Right cardiac atrium (tissue), 5 donors: ENCODE measurements at regions of chr2 and their contacts with region 1.

Region 1: DNA sequence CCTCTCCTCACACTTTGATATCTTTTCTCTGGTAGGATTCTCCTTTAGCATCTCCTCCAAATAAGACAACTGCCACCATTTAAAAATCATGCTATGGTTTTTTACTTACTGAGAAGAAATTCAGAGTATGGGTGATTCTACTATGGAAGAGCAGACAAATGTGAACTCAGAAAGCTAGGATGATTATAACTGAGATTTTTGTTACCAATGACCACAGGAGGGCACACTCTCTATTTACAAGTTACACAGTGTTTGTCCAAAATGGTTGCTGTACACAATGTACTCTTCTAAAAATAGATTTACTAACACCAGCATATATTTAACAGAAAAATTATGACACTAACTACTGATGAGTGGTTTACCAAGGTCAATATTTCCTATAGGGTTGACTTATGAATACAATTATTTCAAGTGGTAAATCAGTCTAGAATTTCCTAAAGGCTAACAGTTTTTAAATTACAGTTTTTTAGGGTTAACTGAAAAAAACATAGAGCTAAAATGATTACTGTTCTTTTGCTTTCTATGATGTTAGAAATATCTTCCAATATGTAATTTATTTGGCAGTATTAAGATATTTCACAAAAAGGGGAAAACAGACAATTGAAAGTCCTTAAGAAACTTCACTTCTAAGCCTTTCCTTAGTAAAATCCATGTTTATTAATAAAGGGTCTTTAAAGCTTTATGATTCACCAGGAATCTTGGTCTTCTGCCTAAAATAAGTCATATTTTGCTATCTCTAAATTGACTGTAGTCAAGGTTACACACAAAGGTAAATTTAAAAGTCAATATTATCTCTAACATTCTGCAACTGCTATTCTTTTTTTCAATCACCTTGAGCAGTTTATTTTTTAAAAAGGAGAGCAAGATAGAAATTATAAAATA is 57.2 kb downstream of the MAP4K3 start:
- DNase-seq: no peak
- ATAC-seq: peak; percentile 79 to 84
- H3K4me3 ChIP-seq: no peak overlapping the region
- H3K27ac ChIP-seq: no peak overlapping the region
- H3K4me1 ChIP-seq: peaks cover 3% of the 10 kb centered on the region
- H3K27me3 ChIP-seq: no peaks in the 10 kb centered on the region

Region 2: DNA sequence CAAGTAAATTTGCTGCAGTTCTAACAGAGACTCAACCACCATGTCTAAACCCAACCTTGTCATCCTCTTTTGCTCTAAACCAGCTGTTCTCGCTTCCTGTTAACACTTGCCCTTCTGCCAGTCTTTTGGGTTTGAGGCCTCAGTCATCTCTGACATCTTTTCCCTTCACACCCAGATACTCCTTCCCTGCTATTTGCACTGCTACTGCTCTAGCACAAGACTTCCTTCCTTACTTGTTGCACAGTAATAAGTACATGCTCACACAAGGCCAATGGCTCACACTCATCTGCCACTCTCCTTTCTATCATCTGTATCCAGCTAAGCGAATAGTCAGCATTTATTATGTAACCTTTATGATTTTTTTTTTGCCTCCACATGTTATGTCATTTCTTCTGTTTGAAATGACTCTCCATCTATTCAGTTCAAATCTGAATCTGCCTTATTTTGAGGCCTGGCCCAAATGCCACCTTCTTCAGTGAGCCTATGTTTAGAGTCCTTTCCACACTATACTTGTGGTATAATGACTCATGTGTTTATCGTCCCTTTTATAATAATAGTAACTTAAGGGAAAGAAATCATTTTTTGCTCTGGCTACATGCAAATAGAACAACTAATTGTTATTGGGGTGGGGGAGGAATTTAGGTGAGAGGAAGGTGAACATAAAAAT is 113.6 kb before region 1 on chr2:
- intact Hi-C with region 1: no loop called
- DNase-seq: no peak
- ATAC-seq: no peak
- H3K4me3 ChIP-seq: no peak overlapping the region
- H3K27ac ChIP-seq: no peak overlapping the region
- H3K4me1 ChIP-seq: no peaks in the 10 kb centered on the region
- H3K27me3 ChIP-seq: no peaks in the 10 kb centered on the region

Region 3: GRCh38 chr2:39436592-39437510 is 57.0 kb after region 1 on chr2 and contains the start of gene MAP4K3:
- intact Hi-C with region 1: loop called in 3 of 4 experiments (anchors 5 to 10 kb)
- DNase-seq: peak; percentile 95 to 97 (median 96)
- ATAC-seq: peak; percentile 94 to 95
- H3K4me3 ChIP-seq: peak within 1 kb of the TSS; percentile 61
- H3K27ac ChIP-seq: peak within 1 kb of the TSS; percentile 98
- H3K4me1 ChIP-seq: no peaks in the 10 kb centered on the region
- H3K27me3 ChIP-seq: no peaks in the 10 kb centered on the region
- total RNA-seq, gene MAP4K3: 39.3 to 50.0 (median 43.5) TPM

Region 4: GRCh38 chr2:39513641-39514094 is 133.8 kb after region 1 on chr2:
- intact Hi-C with region 1: loop called in 2 of 4 experiments (anchors 10 kb)
- DNase-seq: peak in 2 of 3 donors; percentile 46 to 66
- ATAC-seq: peak; percentile 68 to 87
- H3K4me3 ChIP-seq: no peak overlapping the region
- H3K27ac ChIP-seq: peak overlapping the region; percentile 75
- H3K4me1 ChIP-seq: peaks cover 28% of the 10 kb centered on the region
- H3K27me3 ChIP-seq: no peaks in the 10 kb centered on the region